ENCODE measurements at regions of chr1 and their contacts with region 1.

Region 1: GRCh38 chr1:15100121-15100874 is 53.2 kb upstream of the TMEM51 start:
- DNase-seq: peak; percentile 74
- ATAC-seq: peak; percentile 81
- H3K4me3 Mint-ChIP-seq: no peak overlapping the region
- H3K27ac Mint-ChIP-seq: no peak overlapping the region
- H3K4me1 Mint-ChIP-seq: peaks cover 9% of the 10 kb centered on the region
- H3K27me3 Mint-ChIP-seq: peaks cover 26% of the 10 kb centered on the region

Region 2: GRCh38 chr1:14923727-14924452 is 176.4 kb before region 1 on chr1:
- CTCF ChIA-PET with region 1: interaction called, 3 read pairs
- POLR2A ChIA-PET with region 1: no interaction called
- intact Hi-C with region 1: loop called in 1 of 2 experiments (anchors 5 kb)
- DNase-seq: peak; percentile 58
- ATAC-seq: peak; percentile 79
- H3K4me3 Mint-ChIP-seq: peak overlapping the region; percentile 60
- H3K27ac Mint-ChIP-seq: no peak overlapping the region
- H3K4me1 Mint-ChIP-seq: peaks cover 2% of the 10 kb centered on the region
- H3K27me3 Mint-ChIP-seq: peaks cover 34% of the 10 kb centered on the region

Region 3: GRCh38 chr1:15038232-15039016 is 61.9 kb before region 1 on chr1:
- CTCF ChIA-PET with region 1: no interaction called
- POLR2A ChIA-PET with region 1: no interaction called
- intact Hi-C with region 1: loop called in 1 of 2 experiments (anchors 1 kb)
- DNase-seq: peak; percentile 52
- ATAC-seq: peak; percentile 87
- H3K4me3 Mint-ChIP-seq: no peak overlapping the region
- H3K27ac Mint-ChIP-seq: no peak overlapping the region
- H3K4me1 Mint-ChIP-seq: peaks cover 8% of the 10 kb centered on the region
- H3K27me3 Mint-ChIP-seq: no peaks in the 10 kb centered on the region

Region 4: DNA sequence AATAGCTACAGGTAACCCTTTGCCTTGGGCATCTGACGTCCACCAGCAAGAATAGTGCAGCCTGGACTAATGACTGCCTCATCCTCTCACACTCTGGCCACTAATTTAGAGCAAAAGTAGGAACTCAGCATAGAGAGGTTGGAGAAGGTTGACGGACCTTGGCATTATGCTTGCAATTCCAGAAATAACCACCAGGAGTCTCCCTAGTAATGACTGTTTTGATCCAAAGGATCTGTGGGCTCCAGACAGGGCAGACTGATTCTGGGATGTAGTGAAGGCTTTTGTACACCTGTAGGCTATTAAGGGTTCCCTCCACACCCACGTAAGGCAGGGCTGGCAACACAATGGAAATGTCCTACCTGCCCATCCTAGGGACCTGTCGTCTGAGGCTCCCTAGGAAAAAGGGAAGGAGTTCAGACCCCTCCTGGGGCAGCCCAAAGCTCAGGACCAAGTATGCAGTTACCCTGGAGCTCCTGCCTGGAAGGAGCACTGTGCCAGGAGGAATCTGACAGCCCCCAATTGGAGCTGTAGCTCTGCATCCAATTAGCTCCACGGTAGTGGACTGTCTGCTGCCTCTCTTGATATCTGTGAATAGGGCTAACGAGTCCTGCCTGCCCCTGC is 37.7 kb before region 1 on chr1:
- CTCF ChIA-PET with region 1: interaction called, 3 read pairs
- POLR2A ChIA-PET with region 1: no interaction called
- intact Hi-C with region 1: loop called (anchors 1 to 2 kb)
- DNase-seq: no peak
- ATAC-seq: no peak
- H3K4me3 Mint-ChIP-seq: no peak overlapping the region
- H3K27ac Mint-ChIP-seq: no peak overlapping the region
- H3K4me1 Mint-ChIP-seq: no peaks in the 10 kb centered on the region
- H3K27me3 Mint-ChIP-seq: no peaks in the 10 kb centered on the region